Activated CD4-positive, alpha-beta T cell treated with anti-CD3 and anti-CD28 coated beads for 36 hours (primary cell): ENCODE measurements at regions of chr11 and their contacts with region 1.

Region 1: DNA sequence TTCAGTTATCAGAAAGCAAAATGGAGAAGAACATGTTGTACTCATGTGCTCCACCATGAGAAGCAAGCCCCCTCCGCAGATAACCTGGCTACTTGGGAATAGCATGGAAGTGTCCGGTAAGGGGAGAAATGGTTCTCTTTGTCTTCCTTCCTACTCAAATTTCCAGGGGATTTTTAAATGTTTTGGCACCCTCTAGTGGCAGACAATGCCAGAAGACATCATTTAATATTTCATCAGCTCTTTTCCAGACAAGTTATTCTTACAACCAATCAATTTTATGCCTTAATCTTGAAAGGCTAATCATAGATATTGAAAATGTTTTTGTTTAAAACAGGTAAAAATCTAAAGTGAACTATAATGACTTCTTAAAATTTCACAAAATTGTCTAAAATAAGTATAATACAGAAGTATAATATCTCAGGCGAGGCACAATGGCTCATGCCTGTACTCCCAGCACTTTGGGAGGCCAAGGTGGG is 15.7 kb downstream of the CRTAM start:
- DNase-seq: peak; percentile 54
- ATAC-seq: no peak
- H3K4me3 Mint-ChIP-seq: no peak overlapping the region
- H3K27ac Mint-ChIP-seq: no peak overlapping the region
- H3K4me1 Mint-ChIP-seq: peaks cover 46% of the 10 kb centered on the region
- H3K27me3 Mint-ChIP-seq: no peaks in the 10 kb centered on the region

Region 2: GRCh38 chr11:122578168-122578825 is 275.7 kb before region 1 on chr11:
- CTCF ChIA-PET with region 1: interaction called, 46 read pairs
- POLR2A ChIA-PET with region 1: no interaction called
- intact Hi-C with region 1: loop called (anchors 1 to 2 kb)
- DNase-seq: peak; percentile 16
- ATAC-seq: no peak
- H3K4me3 Mint-ChIP-seq: no peak overlapping the region
- H3K27ac Mint-ChIP-seq: no peak overlapping the region
- H3K4me1 Mint-ChIP-seq: peaks cover 8% of the 10 kb centered on the region
- H3K27me3 Mint-ChIP-seq: no peaks in the 10 kb centered on the region

Region 3: DNA sequence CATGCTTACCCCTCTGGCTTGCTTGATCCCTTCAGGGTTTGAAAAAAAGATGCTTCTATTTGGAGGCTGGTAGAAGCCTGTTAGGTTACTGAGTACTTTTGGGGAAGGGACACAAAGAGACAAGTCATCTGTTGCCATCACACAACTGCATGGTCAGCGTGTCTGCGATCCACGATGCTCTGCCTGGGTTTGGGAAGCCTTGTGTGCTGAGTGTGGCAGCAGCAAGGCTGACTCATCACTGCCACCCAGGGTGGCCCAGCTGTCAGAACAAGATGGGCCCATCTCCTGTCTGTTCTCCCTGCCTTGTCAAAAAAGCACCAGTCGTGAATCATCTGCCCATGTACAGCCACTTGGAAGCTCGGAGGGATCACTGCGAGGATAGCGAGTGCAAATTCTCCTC is 172.3 kb before region 1 on chr11:
- CTCF ChIA-PET with region 1: no interaction called
- POLR2A ChIA-PET with region 1: no interaction called
- intact Hi-C with region 1: no loop called
- DNase-seq: peak; percentile 44
- ATAC-seq: peak; percentile 82
- H3K4me3 Mint-ChIP-seq: no peak overlapping the region
- H3K27ac Mint-ChIP-seq: no peak overlapping the region
- H3K4me1 Mint-ChIP-seq: peaks cover 36% of the 10 kb centered on the region
- H3K27me3 Mint-ChIP-seq: no peaks in the 10 kb centered on the region

Region 4: DNA sequence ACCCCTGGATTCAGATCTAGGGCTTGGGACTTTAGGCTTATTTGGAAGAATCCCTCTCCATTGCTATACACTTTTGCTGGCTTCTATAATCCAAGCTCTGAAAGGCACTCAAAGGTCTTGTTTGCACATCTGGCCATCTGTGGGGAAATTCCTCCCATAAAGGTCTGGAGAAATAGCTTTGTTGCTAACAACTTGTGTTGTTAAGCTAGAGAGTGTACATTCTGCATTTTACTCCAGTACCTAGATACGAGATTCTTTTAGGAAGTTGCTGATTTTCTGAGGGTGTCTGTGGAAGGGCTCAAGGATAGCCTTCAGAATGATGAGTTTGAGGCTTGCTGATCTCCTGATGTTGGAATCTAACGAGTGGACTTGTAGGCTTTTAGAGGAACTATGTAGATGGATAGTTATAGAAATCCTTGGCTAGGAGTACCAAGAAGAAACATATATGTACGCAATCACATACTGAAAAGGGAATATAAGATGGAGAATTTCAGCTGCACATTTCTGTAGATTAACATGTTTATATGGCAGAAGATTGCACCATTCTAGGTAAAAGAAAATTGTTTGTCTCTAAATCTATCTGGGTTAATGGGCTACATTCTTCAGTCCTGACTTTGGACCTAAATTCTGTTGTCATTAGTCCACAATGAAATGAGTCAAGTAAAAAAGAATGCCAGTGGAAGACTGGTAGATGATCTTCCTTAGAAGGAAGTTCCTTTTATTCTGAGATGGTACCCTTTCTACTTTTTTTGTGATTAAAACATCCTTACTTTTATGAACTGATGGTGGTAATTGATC is 147.5 kb before region 1 on chr11:
- CTCF ChIA-PET with region 1: no interaction called
- POLR2A ChIA-PET with region 1: no interaction called
- intact Hi-C with region 1: no loop called
- DNase-seq: no peak
- ATAC-seq: no peak
- H3K4me3 Mint-ChIP-seq: no peak overlapping the region
- H3K27ac Mint-ChIP-seq: no peak overlapping the region
- H3K4me1 Mint-ChIP-seq: peaks cover 43% of the 10 kb centered on the region
- H3K27me3 Mint-ChIP-seq: no peaks in the 10 kb centered on the region

Region 5: GRCh38 chr11:122743949-122744348 is 110.1 kb before region 1 on chr11:
- CTCF ChIA-PET with region 1: interaction called, 10 read pairs
- POLR2A ChIA-PET with region 1: no interaction called
- intact Hi-C with region 1: loop called (anchors 1 to 2 kb)
- DNase-seq: peak; percentile 90
- ATAC-seq: peak; percentile 66
- H3K4me3 Mint-ChIP-seq: no peak overlapping the region
- H3K27ac Mint-ChIP-seq: no peak overlapping the region
- H3K4me1 Mint-ChIP-seq: peaks cover 14% of the 10 kb centered on the region
- H3K27me3 Mint-ChIP-seq: peaks cover 6% of the 10 kb centered on the region

Region 6: GRCh38 chr11:122788781-122789535 is 65.1 kb before region 1 on chr11:
- CTCF ChIA-PET with region 1: interaction called, 119 read pairs
- POLR2A ChIA-PET with region 1: no interaction called
- intact Hi-C with region 1: no loop called
- DNase-seq: peak; percentile 29
- ATAC-seq: no peak
- H3K4me3 Mint-ChIP-seq: no peak overlapping the region
- H3K27ac Mint-ChIP-seq: no peak overlapping the region
- H3K4me1 Mint-ChIP-seq: peaks cover 2% of the 10 kb centered on the region
- H3K27me3 Mint-ChIP-seq: no peaks in the 10 kb centered on the region

Region 7: DNA sequence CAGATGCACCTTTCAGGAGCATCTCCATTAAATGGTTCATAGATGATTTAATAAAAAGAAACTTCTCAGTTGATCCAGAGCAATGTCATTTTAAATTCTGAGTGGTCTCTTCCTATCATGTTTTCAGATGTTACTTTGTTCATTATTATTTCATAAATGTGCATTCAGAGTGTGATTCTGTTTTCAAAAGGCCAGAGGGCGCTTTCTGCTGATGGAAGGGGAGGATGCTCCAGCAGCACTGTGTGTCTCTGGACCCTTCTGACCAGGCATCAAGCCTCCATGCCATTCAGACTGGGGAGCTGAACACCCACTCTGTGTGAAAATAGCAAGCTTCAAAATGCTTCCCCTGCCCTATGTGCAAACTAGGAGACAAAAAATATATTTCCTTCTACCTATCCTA is 39.6 kb before region 1 on chr11:
- CTCF ChIA-PET with region 1: interaction called, 30 read pairs
- POLR2A ChIA-PET with region 1: no interaction called
- intact Hi-C with region 1: loop called (anchors 1 to 5 kb)
- DNase-seq: peak; percentile 17
- ATAC-seq: no peak
- H3K4me3 Mint-ChIP-seq: no peak overlapping the region
- H3K27ac Mint-ChIP-seq: no peak overlapping the region
- H3K4me1 Mint-ChIP-seq: peaks cover 12% of the 10 kb centered on the region
- H3K27me3 Mint-ChIP-seq: no peaks in the 10 kb centered on the region

Region 8: GRCh38 chr11:122882857-122883645 is 29.0 kb after region 1 on chr11:
- CTCF ChIA-PET with region 1: interaction called, 5 read pairs
- POLR2A ChIA-PET with region 1: interaction called, 3 read pairs
- intact Hi-C with region 1: loop called in 1 of 2 experiments (anchors 2 kb)
- DNase-seq: no peak
- ATAC-seq: peak; percentile 74
- H3K4me3 Mint-ChIP-seq: peak overlapping the region; percentile 77
- H3K27ac Mint-ChIP-seq: peak overlapping the region; percentile 63
- H3K4me1 Mint-ChIP-seq: peaks cover 34% of the 10 kb centered on the region
- H3K27me3 Mint-ChIP-seq: peaks cover 6% of the 10 kb centered on the region

Region 9: DNA sequence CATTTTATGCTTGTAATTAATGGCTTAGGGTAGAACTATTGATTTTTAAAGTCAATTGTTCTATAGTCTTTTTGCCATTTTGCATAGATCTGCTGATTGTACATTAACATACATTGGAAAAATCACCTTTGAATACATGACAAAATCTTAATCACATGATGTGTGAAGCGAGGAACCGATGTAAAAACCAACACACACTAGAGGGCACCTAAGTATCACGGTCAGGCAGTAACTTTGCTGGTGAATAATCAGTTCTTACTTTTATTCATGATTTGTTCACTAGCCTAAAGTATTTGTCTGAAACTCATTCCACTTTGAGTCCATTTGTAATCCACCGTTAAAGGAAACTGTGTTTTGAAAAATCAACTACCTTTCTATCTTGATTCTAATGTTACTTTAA is 56.8 kb after region 1 on chr11:
- CTCF ChIA-PET with region 1: no interaction called
- POLR2A ChIA-PET with region 1: no interaction called
- intact Hi-C with region 1: no loop called
- DNase-seq: peak; percentile 19
- ATAC-seq: no peak
- H3K4me3 Mint-ChIP-seq: no peak overlapping the region
- H3K27ac Mint-ChIP-seq: no peak overlapping the region
- H3K4me1 Mint-ChIP-seq: no peaks in the 10 kb centered on the region
- H3K27me3 Mint-ChIP-seq: no peaks in the 10 kb centered on the region